PC-9 (cell line): ENCODE measurements at regions of chr13 and their contacts with region 1.

Region 1: GRCh38 chr13:41310963-41311606 is at the start of gene NAA16:
- DNase-seq: peak; percentile 75 to 85
- H3K4me3 ChIP-seq: peak within 1 kb of the TSS; percentile 96
- H3K27ac ChIP-seq: peak within 1 kb of the TSS; percentile 49; the same call in 1 of the 2 replicates
- H3K4me1 ChIP-seq: 0 out of 2 replicates have a peak, but pooled peaks cover 16% of the 10 kb centered on the region
- H3K27me3 ChIP-seq: no peaks in the 10 kb centered on the region
- CTCF ChIP-seq: no peak
- total RNA-seq, gene NAA16: 11.0 and 12.1 TPM in 2 replicates

Region 2: DNA sequence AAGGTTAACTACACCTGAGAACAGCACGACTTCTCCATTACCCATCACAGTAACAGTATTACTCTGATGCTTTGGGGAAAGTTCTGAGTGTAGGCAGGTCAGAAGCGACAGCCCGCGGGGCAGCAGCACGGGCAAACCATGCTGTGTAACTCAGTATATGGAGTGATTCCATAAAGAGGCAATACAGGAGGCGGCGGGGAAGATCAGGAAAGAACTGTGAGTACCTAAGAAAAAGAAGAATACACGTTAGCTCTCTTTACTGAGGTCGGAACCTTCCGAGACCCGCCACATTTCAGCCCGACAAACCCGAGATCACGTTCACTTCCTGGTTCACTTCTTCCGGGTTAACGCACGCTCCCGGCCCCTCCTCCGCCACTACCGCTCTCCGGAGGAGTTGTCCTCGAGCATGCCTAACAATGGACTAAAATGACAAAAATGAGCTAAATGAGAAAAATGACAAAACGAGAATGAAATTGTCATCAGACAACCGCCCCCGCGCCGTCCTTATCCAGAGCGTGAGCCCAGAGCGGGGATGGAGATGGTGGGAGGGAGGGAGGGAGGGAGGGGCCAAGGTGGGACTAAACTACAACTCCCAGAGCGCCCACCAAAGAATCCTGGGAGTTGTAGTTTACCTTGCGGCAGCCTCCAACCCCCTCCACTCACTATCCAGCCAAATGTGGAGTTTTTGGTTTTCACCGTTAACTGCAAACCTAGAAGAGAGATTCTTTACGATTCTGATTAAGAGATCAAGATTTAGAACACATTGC is 47.6 kb before region 1 on chr13 and contains the start of gene MTRF1:
- CTCF ChIA-PET with region 1: no interaction called
- POLR2A ChIA-PET with region 1: no interaction called
- intact Hi-C with region 1: loop called (anchors 2 kb)
- DNase-seq: peak; percentile 54 to 57
- H3K4me3 ChIP-seq: peak within 1 kb of the TSS; percentile 96
- H3K27ac ChIP-seq: peak within 1 kb of the TSS; percentile 36; the same call in 1 of the 2 replicates
- H3K4me1 ChIP-seq: peaks cover 5% of the 10 kb centered on the region
- H3K27me3 ChIP-seq: no peaks in the 10 kb centered on the region
- CTCF ChIP-seq: no peak
- total RNA-seq, gene MTRF1: 8.2 and 15.8 TPM in 2 replicates